Naive thymus-derived CD4-positive, alpha-beta T cell (primary cell): ENCODE measurements at regions of chr15 and their contacts with region 1.

Region 1: DNA sequence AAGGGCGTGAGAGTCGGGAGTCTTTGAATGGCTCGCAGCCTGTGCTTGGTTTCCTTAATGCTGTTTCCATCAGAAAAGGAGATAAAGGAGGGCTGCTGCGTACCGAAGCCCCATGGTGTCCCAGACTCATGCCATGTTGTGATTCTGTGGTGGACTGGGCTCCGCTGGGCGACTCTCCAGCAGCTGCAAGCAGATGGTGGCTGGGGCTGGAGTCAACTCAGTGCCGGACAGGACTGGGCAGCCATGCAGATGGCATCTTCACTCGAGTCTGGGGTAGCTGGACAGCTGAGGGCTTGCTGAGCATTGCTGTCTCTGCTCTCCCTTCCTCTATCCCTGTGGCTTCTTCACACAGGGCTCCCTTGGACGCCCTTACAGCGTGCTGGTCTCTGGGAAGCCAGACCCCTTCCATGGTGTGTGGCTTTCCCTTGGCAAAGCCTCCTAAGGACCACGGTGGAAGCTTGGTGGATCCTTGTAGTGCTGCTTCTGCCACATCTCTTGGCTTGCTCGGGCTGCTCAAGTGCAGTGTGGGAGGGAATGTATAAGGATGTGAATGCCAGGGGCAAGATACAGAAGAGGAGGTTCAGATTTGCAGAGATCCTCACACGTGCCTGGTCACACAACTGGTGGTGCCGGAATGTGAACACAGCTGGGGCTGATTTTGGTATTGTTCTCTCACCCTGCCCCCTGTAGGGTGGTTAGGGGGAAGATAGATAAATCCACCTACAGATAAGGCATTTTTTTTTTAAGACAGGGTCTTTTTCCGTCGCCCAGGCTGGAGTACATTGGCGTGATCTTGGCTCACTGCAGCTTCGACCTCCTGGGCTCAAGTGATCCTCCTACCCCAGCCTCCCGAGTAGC is 9.0 kb downstream of the NIPA1 start:
- DNase-seq: no peak
- ATAC-seq: no peak
- H3K4me3 ChIP-seq: no peak overlapping the region
- H3K4me3 Mint-ChIP-seq: no peak overlapping the region
- H3K27ac ChIP-seq: no peak overlapping the region
- H3K27ac Mint-ChIP-seq: peak overlapping the region in 1 of 9 donors; percentile 5
- H3K4me1 ChIP-seq: no peaks in the 10 kb centered on the region
- H3K4me1 Mint-ChIP-seq: peaks cover 9 to 41% (median 34%) of the 10 kb centered on the region in 7 donors
- H3K27me3 ChIP-seq: no peaks in the 10 kb centered on the region
- H3K27me3 Mint-ChIP-seq: no peaks in the 10 kb centered on the region

Region 2: DNA sequence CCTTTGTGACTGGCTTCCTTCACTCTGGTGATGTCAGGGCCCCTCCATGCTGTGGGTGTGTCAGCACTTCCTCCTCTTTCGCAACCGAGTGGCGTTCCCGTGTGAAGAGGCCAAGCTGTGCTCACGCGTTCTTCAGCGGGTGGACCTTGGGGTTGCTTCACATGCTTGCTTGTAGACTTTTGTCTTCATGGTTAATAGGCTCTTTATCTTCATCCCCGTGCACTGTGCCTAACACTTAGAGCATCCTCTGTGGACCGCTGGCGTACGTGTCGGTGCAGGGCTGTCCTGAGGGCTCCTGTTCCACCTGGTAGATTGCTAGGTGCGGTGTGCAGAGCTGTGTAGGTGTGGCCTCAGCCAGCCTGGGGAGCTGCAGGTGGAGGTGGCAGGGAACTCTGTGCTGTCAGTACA is 532.8 kb before region 1 on chr15:
- CTCF ChIA-PET with region 1: no interaction called
- POLR2A ChIA-PET with region 1: no interaction called
- intact Hi-C with region 1: no loop called
- DNase-seq: peak in 1 of 9 donors; percentile 36
- ATAC-seq: peak; percentile 80
- H3K4me3 ChIP-seq: no peak overlapping the region
- H3K4me3 Mint-ChIP-seq: no peak overlapping the region
- H3K27ac ChIP-seq: no peak overlapping the region
- H3K27ac Mint-ChIP-seq: no peak overlapping the region
- H3K4me1 ChIP-seq: peaks cover 26 to 40% of the 10 kb centered on the region in 2 donors
- H3K4me1 Mint-ChIP-seq: peaks cover 16 to 29% (median 22%) of the 10 kb centered on the region in 7 donors
- H3K27me3 ChIP-seq: no peaks in the 10 kb centered on the region
- H3K27me3 Mint-ChIP-seq: peaks cover 0 to 26% (median 10%) of the 10 kb centered on the region in 5 donors

Region 3: DNA sequence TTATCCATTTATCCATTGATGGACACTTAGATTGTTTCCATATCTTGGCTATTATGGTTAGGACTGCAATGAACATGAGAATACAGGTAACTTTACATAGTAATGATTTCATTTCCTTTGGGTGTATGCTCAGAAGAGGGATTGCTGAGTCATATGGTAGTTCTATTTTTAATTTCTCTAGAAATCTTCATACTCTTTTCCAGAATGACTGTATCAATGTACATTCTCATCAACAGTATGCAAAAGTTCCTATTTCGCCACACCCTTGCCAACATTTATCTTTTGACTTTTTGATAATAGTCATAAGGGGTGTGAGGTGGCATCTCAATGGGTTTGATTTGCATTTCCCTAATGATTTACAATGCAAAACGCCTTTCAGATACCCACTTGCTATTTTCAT is 15.2 kb before region 1 on chr15:
- CTCF ChIA-PET with region 1: no interaction called
- POLR2A ChIA-PET with region 1: no interaction called
- intact Hi-C with region 1: no loop called
- DNase-seq: no peak
- ATAC-seq: no peak
- H3K4me3 ChIP-seq: no peak overlapping the region
- H3K4me3 Mint-ChIP-seq: peak overlapping the region in 1 of 10 donors; percentile 62
- H3K27ac ChIP-seq: no peak overlapping the region
- H3K27ac Mint-ChIP-seq: peak overlapping the region in 1 of 9 donors; percentile 14
- H3K4me1 ChIP-seq: no peaks in the 10 kb centered on the region
- H3K4me1 Mint-ChIP-seq: peaks cover 0 to 24% (median 0%) of the 10 kb centered on the region in 7 donors
- H3K27me3 ChIP-seq: no peaks in the 10 kb centered on the region
- H3K27me3 Mint-ChIP-seq: peaks cover 0 to 11% (median 0%) of the 10 kb centered on the region in 5 donors

Region 4: GRCh38 chr15:22811640-22812039 is 16.2 kb after region 1 on chr15:
- CTCF ChIA-PET with region 1: no interaction called
- POLR2A ChIA-PET with region 1: no interaction called
- intact Hi-C with region 1: loop called in 1 of 2 experiments (anchors 2 kb)
- DNase-seq: no peak
- ATAC-seq: no peak
- H3K4me3 ChIP-seq: no peak overlapping the region
- H3K4me3 Mint-ChIP-seq: no peak overlapping the region
- H3K27ac ChIP-seq: no peak overlapping the region
- H3K27ac Mint-ChIP-seq: no peak overlapping the region
- H3K4me1 ChIP-seq: no peaks in the 10 kb centered on the region
- H3K4me1 Mint-ChIP-seq: peaks cover 0 to 9% (median 2%) of the 10 kb centered on the region in 7 donors
- H3K27me3 ChIP-seq: no peaks in the 10 kb centered on the region
- H3K27me3 Mint-ChIP-seq: no peaks in the 10 kb centered on the region